ENCODE measurements at regions of chr5 and their contacts with region 1.

Region 1: DNA sequence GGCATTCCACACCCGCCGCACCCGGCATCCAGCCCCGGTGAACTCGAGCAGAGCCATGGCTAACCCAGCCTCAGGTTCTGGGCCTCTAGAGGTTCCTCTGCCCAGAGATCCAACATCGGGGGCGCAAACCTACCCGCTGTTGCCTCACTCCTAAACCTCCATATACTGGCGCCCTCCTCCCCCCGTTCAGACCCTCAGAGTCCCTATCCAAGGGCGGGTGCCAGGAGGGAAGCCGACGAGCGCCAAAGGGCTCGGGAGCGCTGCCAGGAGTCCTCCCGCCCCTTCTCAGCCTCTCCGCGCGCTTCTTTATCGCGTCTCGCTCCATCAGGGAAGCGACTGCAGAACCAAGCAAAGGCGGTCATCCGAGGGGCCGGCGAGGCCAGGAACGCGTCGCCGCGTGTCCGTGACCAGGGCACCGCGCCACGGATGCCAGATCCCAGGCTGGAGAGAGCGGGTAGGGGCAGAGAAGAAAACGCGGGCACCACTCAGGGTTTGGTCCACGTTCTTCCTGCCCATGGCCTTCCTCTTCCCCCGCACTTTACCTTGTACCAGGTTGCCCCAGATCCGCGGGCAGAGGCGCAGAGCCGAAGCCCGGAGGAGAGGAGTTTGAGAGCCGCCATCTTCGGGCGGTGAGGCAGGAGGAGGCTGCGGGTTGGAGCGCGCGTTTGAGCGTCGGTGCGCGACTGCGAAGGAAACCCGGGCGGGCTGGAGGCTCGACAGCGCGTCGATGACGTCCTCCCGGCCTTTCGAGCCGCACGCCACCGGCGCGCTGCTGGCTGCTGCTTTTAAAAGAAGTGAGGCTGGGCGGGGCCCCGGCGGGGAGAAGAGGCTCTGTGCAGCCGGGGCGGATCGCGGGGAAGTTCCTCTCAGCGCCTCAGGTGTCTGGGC is at the start of gene OXCT1:
- DNase-seq: peak; percentile 82
- ATAC-seq: peak; percentile 95
- H3K4me3 Mint-ChIP-seq: peak within 1 kb of the TSS; percentile 93
- H3K27ac Mint-ChIP-seq: peak within 1 kb of the TSS; percentile 91
- H3K4me1 Mint-ChIP-seq: peaks cover 32% of the 10 kb centered on the region
- H3K27me3 Mint-ChIP-seq: no peaks in the 10 kb centered on the region
- CTCF ChIP-seq: no peak
- total RNA-seq, gene OXCT1: 27.3 and 27.4 TPM in 2 replicates

Region 2: GRCh38 chr5:41885286-41885685 is 15.3 kb after region 1 on chr5:
- CTCF ChIA-PET with region 1: no interaction called
- POLR2A ChIA-PET with region 1: no interaction called
- intact Hi-C with region 1: no loop called
- DNase-seq: no peak
- ATAC-seq: no peak
- H3K4me3 Mint-ChIP-seq: no peak overlapping the region
- H3K27ac Mint-ChIP-seq: no peak overlapping the region
- H3K4me1 Mint-ChIP-seq: no peaks in the 10 kb centered on the region
- H3K27me3 Mint-ChIP-seq: peaks cover 29% of the 10 kb centered on the region
- CTCF ChIP-seq: no peak

Region 3: GRCh38 chr5:41924872-41925554 is 55.0 kb after region 1 on chr5 and contains the start of gene FBXO4:
- CTCF ChIA-PET with region 1: no interaction called
- POLR2A ChIA-PET with region 1: interaction called, 13 read pairs
- intact Hi-C with region 1: loop called (anchors 1 kb)
- DNase-seq: peak; percentile 82
- ATAC-seq: peak; percentile 95
- H3K4me3 Mint-ChIP-seq: peak within 1 kb of the TSS; percentile 93
- H3K27ac Mint-ChIP-seq: peak within 1 kb of the TSS; percentile 97
- H3K4me1 Mint-ChIP-seq: peaks cover 24% of the 10 kb centered on the region
- H3K27me3 Mint-ChIP-seq: no peaks in the 10 kb centered on the region
- CTCF ChIP-seq: no peak
- total RNA-seq, gene FBXO4: 14.8 and 15.9 TPM in 2 replicates